ENCODE measurements at regions of chr19 and their contacts with region 1.

Region 1: DNA sequence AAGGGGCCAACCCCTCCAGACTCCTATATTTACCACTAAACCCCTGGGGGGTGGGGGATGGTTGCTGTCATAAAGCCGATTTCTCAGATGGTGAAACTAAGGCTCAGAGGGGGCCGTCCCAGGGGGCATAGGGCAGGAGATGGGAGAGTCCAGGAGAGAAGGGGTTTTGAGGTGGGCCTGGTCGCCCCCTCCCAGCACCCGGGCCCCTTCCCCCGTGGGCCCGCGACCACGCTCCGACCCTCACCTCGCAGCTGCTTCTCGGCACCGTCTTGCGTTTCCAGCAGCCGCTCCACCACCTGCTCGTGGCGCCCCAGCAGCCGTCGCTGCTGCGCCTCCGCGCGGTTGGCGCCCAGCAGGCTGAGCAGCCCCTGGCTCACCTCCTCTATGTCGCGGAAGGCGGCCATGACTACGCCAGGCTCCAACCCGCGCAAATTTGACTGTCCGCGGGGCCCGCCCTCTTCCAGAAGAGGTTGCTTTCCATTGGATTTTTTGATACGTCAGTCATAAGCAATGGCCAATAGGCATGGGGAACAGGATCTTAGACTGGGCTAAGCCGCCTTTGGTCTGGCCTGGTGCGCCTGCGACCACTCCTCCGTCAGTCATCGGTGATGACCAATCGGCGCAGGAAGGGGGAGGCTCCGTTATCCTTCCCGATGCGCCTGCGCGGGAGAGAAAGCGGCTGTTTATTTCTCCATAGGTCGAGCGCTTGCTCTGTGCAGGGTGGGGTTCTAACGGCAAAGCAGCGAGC is at the start of gene SPC24:
- DNase-seq: peak; percentile 71 to 97 (median 84)
- ATAC-seq: peak; percentile 93
- H3K4me3 ChIP-seq: peak within 1 kb of the TSS; percentile 62
- H3K4me3 Mint-ChIP-seq: peak within 1 kb of the TSS; percentile 90
- H3K27ac ChIP-seq: no peak within 1 kb of the TSS
- H3K27ac Mint-ChIP-seq: peak within 1 kb of the TSS; percentile 74
- H3K4me1 ChIP-seq: peaks cover 17% of the 10 kb centered on the region
- H3K4me1 Mint-ChIP-seq: peaks cover 17% of the 10 kb centered on the region
- H3K27me3 ChIP-seq: no peaks in the 10 kb centered on the region
- H3K27me3 Mint-ChIP-seq: no peaks in the 10 kb centered on the region
- CTCF ChIP-seq: no peak
- total RNA-seq, gene SPC24: 0.59 to 1.5 TPM

Region 2: GRCh38 chr19:11041966-11042627 is 113.5 kb before region 1 on chr19:
- CTCF ChIA-PET with region 1: no interaction called
- POLR2A ChIA-PET with region 1: no interaction called
- intact Hi-C with region 1: no loop called
- DNase-seq: peak in 1 of 14 experiments; percentile 5
- ATAC-seq: no peak
- H3K4me3 ChIP-seq: no peak overlapping the region
- H3K4me3 Mint-ChIP-seq: no peak overlapping the region
- H3K27ac ChIP-seq: no peak overlapping the region
- H3K27ac Mint-ChIP-seq: no peak overlapping the region
- H3K4me1 ChIP-seq: peaks cover 2% of the 10 kb centered on the region
- H3K4me1 Mint-ChIP-seq: peaks cover 4% of the 10 kb centered on the region
- H3K27me3 ChIP-seq: no peaks in the 10 kb centered on the region
- H3K27me3 Mint-ChIP-seq: no peaks in the 10 kb centered on the region
- CTCF ChIP-seq: no peak

Region 3: DNA sequence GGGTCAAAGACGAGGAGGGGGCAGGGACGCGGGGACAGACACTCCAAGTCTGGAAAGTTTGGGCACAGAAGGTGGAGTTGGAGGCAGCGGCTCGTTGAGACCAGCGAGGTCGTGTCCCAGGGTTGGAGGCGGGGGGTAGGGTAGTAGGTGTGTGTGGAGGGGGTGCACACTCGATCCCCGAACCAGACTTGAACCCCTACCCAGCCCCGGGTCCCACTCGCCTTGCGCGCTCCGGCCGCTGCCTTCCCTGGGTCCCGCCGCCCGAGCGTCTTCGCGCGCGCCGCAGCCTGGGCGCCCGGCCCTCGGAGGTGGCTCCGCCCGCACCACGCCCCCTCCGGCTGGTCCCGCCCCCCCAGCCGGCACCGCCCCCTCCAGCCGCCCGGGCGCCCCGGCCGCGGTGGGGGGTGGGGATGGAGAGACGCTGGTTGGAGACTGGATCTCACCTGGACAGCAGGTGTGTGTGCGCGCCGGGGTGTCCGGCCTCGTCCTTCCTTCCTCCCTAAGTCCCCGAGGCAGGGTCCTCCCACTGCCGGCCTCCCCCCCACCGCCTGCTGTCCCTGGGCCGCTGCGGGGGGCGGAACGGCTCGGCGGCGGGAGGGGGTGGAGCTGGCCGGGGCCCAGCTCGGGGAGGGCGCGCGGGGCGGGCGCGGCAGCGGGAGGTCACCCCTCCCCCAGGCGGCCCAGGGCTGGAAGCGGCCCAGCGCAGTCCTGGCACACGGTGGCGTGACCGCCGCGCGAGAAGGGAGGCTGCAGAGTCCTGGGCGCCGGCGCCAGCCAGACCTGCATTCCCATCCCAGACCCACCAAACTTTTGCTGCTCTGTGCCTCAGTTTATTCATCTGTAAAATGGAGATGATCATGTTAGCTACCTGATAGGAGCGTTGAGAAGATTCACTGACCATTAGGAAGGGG is 42.0 kb after region 1 on chr19 and contains the start of gene KANK2:
- CTCF ChIA-PET with region 1: no interaction called
- POLR2A ChIA-PET with region 1: no interaction called
- intact Hi-C with region 1: loop called in 1 of 2 experiments (anchors 5 kb)
- DNase-seq: peak; percentile 34 to 86 (median 66)
- ATAC-seq: peak; percentile 89
- H3K4me3 ChIP-seq: peak within 1 kb of the TSS; percentile 48
- H3K4me3 Mint-ChIP-seq: peak within 1 kb of the TSS; percentile 68
- H3K27ac ChIP-seq: no peak within 1 kb of the TSS
- H3K27ac Mint-ChIP-seq: no peak within 1 kb of the TSS
- H3K4me1 ChIP-seq: peaks cover 22% of the 10 kb centered on the region
- H3K4me1 Mint-ChIP-seq: peaks cover 8% of the 10 kb centered on the region
- H3K27me3 ChIP-seq: peaks cover 11% of the 10 kb centered on the region in 2 experiments
- H3K27me3 Mint-ChIP-seq: peaks cover 16% of the 10 kb centered on the region
- CTCF ChIP-seq: no peak
- total RNA-seq, gene KANK2: not detected

Measured in CD4-positive, alpha-beta T cell (primary cell).